ENCODE measurements at regions of chr12 and their contacts with region 1.

Region 1: DNA sequence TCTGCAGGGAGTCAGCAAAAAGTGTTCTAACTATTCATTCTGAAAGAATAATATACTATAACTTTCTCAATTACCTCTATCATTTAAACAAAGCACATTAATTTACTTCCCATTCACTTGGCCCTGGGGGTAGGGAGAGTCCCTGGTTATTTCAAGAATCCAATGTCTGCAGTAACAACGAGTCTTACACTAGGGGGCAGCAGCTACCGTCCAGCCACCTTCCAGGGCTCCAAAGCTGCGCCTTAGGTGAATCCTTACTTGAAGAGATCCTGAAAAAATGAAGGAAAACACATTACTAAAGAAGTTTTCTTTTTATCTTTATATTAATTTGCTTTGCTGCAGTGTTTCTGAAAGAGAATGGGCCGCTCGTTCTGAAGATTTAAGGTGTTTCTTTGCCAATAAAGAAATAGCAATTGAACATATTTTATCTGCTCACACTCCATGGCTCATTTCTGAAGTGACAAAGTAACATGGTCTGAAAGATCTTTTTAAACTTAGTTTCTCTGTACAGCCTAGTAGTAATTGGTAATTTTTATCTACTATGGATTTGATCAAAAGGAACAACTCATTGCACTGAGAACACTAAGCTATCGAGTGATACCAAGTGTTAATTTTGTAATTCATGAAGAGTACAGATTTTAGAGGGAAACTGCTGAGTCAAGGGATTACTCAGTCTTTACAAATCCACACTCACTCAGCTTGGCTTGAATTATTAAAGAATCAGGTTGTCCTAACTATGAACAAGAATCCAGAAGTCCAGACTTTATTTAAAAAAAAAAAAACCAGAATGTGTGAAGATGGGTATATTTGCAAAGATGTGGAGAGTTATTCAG is 27.6 kb downstream of the BHLHE41 start:
- DNase-seq: peak; percentile 86
- H3K4me3 Mint-ChIP-seq: no peak overlapping the region
- H3K27ac Mint-ChIP-seq: no peak overlapping the region
- H3K4me1 Mint-ChIP-seq: peaks cover 7% of the 10 kb centered on the region
- H3K27me3 Mint-ChIP-seq: no peaks in the 10 kb centered on the region
- CTCF ChIP-seq: peak; percentile 93

Region 2: DNA sequence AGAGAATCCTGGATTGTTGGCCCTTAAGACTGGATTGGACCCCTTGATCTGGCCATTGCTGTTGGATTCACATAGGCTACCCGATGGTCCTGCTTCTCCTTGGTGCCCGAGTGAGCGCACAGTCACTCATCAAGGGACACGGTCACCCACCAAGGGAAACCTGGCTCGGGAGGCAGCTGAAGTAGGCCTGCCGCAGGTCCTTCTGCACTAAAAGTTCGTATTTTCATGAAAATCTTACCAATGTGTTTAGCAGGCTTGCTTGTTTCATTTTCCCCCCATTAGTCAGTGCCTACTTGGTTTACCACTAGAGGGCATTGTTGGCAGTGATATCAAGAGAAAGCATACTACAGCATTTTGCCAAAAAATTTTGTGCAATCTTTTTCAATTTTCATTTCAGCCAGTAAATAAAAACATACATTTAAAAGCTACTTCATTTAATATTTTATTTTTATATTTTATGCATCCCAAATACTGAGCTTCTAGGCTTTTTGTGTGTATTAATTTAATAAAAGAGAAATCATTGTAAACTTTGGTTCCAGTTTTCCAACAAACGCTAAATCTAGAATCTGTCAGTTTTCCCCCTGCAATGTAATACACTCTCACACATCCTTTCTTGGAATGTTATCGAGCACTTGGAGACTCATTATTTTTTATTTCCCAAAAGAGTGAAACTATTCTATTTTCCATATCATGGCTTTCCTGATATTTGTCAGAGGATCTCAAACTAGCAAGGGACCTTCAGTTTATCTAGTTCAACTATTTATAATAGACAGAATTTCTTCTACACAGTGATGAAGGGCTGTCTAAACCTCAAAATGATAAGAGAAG is 660.8 kb before region 1 on chr12:
- CTCF ChIA-PET with region 1: interaction called, 7 read pairs
- POLR2A ChIA-PET with region 1: interaction called, 3 read pairs
- intact Hi-C with region 1: loop called (anchors 5 kb)
- DNase-seq: peak; percentile 81
- H3K4me3 Mint-ChIP-seq: peak overlapping the region; percentile 32
- H3K27ac Mint-ChIP-seq: peak overlapping the region; percentile 65
- H3K4me1 Mint-ChIP-seq: peaks cover 15% of the 10 kb centered on the region
- H3K27me3 Mint-ChIP-seq: no peaks in the 10 kb centered on the region
- CTCF ChIP-seq: peak; percentile 78

Region 3: DNA sequence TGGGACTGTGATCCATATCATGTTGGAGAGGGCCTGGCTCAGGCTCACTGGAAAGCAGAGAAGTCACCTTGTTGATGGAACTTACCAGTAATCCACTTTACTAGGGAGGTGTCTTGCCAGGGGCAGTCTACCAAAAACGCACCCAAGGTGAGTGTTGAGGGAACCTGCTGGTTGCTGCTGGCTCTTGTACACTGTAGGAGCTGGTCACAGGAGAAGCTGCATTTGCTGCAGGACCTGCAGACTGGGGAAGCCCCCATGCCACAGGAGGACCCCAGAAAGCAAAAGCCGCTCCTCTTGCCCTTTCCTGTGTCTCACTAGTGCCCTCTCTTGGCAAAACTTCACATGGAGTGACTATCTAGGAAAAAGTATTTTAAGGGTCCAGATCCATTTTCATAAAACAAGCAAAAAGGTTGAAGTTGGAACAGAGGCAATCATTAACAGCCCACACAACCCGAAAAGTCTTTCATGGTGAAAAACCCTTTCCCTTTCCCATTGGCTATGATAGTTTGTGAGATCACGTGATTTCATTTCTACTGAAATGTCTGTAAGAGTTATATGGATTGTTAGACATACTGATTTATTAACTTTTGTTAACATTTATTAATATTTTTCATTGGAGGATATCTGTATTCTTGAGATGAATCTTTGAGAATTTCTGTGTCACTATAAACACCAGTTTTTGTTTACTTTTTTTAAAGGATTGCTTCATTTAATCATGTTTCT is 79.6 kb before region 1 on chr12:
- CTCF ChIA-PET with region 1: no interaction called
- POLR2A ChIA-PET with region 1: no interaction called
- intact Hi-C with region 1: no loop called
- DNase-seq: peak; percentile 63
- H3K4me3 Mint-ChIP-seq: no peak overlapping the region
- H3K27ac Mint-ChIP-seq: no peak overlapping the region
- H3K4me1 Mint-ChIP-seq: peaks cover 17% of the 10 kb centered on the region
- H3K27me3 Mint-ChIP-seq: no peaks in the 10 kb centered on the region
- CTCF ChIP-seq: peak; percentile 73

Region 4: GRCh38 chr12:26119391-26119981 is 22.2 kb after region 1 on chr12:
- CTCF ChIA-PET with region 1: interaction called, 14 read pairs
- POLR2A ChIA-PET with region 1: interaction called, 6 read pairs
- intact Hi-C with region 1: loop called (anchors 2 kb)
- DNase-seq: peak; percentile 64
- H3K4me3 Mint-ChIP-seq: no peak overlapping the region
- H3K27ac Mint-ChIP-seq: no peak overlapping the region
- H3K4me1 Mint-ChIP-seq: peaks cover 22% of the 10 kb centered on the region
- H3K27me3 Mint-ChIP-seq: peaks cover 4% of the 10 kb centered on the region
- CTCF ChIP-seq: peak; percentile 63

Region 5: GRCh38 chr12:26153421-26154154 is 56.3 kb after region 1 on chr12:
- CTCF ChIA-PET with region 1: no interaction called
- POLR2A ChIA-PET with region 1: no interaction called
- intact Hi-C with region 1: no loop called
- DNase-seq: peak; percentile 75
- H3K4me3 Mint-ChIP-seq: no peak overlapping the region
- H3K27ac Mint-ChIP-seq: peak overlapping the region; percentile 18
- H3K4me1 Mint-ChIP-seq: peaks cover 11% of the 10 kb centered on the region
- H3K27me3 Mint-ChIP-seq: no peaks in the 10 kb centered on the region
- CTCF ChIP-seq: peak; percentile 5

Region 6: DNA sequence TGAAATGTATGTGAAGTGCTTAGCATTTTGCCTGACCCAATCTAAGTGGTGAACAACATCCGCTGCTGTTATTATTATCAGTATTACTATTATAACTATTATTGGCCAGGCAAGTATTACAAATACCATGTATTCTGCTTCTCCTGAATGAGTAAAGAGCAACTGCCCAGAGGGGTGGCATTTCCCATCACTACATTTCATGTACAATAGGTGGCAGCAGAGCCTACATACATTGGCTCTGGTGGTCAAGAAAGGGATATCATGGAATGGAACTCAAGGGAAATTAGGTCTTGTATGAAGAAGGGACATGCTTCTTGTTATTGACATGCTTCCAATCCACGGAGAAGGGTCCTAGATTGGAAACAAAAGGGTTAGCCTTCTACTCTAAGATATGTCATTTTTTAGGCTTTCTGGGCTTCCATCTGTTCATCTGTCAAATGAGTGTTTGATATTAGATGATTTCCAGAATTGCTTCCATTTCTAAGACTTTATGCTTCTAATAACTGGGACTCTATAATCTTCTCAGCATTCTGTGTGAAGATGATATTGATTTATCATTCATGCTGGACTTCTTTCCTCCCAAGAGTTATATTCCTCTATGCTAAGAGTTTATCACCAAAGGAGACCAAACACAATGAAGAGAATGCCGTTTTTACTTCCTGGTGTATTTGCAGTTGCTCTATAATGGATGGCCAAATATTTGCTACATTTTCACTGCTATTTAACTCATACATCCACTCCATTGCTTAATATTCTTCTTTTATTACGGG is 337.2 kb after region 1 on chr12:
- CTCF ChIA-PET with region 1: interaction called, 5 read pairs
- POLR2A ChIA-PET with region 1: no interaction called
- intact Hi-C with region 1: loop called (anchors 1 kb)
- DNase-seq: peak; percentile 72
- H3K4me3 Mint-ChIP-seq: no peak overlapping the region
- H3K27ac Mint-ChIP-seq: no peak overlapping the region
- H3K4me1 Mint-ChIP-seq: no peaks in the 10 kb centered on the region
- H3K27me3 Mint-ChIP-seq: no peaks in the 10 kb centered on the region
- CTCF ChIP-seq: peak; percentile 80

Region 7: GRCh38 chr12:26651566-26652188 is 554.4 kb after region 1 on chr12:
- CTCF ChIA-PET with region 1: interaction called, 5 read pairs
- POLR2A ChIA-PET with region 1: interaction called, 4 read pairs
- intact Hi-C with region 1: loop called (anchors 1 kb)
- DNase-seq: peak; percentile 75
- H3K4me3 Mint-ChIP-seq: no peak overlapping the region
- H3K27ac Mint-ChIP-seq: no peak overlapping the region
- H3K4me1 Mint-ChIP-seq: peaks cover 16% of the 10 kb centered on the region
- H3K27me3 Mint-ChIP-seq: no peaks in the 10 kb centered on the region
- CTCF ChIP-seq: peak; percentile 89

Region 8: DNA sequence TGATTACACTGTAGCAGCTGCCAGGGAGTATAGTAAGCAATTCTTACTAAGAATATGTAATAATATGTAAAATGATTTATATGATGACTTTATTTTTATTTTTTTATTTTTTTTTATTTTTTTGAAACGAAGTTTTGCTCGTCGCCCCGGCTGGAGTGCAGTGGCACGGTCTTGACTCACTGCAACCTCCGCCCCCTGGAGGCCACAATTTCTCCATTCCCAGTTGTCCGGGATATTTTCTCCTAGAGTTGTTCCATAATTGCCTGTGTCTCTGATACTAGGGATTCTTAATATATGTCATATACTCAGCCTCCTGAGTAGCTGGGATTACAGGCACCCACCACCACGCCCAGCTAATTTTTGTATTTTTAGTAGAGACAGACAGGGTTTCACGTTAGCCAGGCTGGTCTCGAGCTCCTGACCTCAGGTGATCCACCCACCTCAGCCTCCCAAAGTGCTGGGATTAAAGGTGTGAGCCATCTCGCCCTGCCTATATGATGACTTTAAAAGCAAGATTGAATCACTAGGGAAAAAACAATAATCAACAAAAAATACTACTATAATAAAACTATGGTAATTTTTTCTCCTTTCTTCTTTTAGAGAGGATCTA is 747.9 kb after region 1 on chr12:
- CTCF ChIA-PET with region 1: no interaction called
- POLR2A ChIA-PET with region 1: no interaction called
- intact Hi-C with region 1: loop called (anchors 10 kb)
- DNase-seq: peak; percentile 66
- H3K4me3 Mint-ChIP-seq: no peak overlapping the region
- H3K27ac Mint-ChIP-seq: no peak overlapping the region
- H3K4me1 Mint-ChIP-seq: no peaks in the 10 kb centered on the region
- H3K27me3 Mint-ChIP-seq: no peaks in the 10 kb centered on the region
- CTCF ChIP-seq: peak; percentile 74

Measured in MCF 10A (cell line).